ENCODE measurements at regions of chr4 and their contacts with region 1.

Region 1: DNA sequence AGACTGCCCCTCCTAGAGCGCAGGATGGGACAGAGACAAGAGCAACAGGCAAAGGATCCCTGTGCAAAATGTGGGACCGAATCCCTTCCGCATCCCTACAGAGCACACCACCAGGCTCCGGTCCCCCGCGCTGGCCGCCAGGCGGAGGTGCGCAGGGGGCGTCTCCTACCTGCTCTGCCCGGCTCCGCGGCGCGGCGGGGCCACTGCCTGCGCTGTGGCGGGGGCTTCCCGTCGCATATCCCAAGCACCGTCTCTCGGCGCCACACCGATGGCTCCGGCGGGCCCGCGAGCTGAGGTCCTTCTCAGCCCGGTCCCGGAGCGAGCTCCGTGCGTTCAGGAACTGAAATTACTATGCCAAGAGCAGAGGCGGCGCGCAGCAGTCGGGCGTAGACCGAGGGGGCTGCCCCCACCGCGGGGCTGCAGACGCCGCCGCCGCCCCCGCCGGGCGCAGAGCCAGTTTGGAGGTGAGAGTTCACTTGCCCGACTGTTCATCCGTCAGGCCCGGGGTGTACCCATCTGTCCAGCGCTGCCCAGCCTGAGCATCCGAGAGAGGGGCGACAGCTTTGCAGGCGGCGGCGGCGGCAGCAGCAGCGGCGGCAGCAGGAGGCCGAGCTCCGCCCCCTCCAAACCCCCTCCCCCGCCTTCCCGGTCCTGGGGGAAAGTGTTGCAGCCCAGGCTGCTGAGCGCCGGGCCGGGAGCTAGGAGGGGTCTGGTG is at the start of gene GPRIN3:
- DNase-seq: peak; percentile 86
- ATAC-seq: peak; percentile 74
- total RNA-seq, gene GPRIN3: 5.9 TPM

Region 2: GRCh38 chr4:89226665-89227574 is 80.7 kb before region 1 on chr4:
- intact Hi-C with region 1: loop called (anchors 5 kb)
- DNase-seq: no peak
- ATAC-seq: peak; percentile 92

Region 3: GRCh38 chr4:89242864-89243732 is 64.5 kb before region 1 on chr4:
- intact Hi-C with region 1: loop called (anchors 5 kb)
- DNase-seq: no peak
- ATAC-seq: peak; percentile 72

Region 4: DNA sequence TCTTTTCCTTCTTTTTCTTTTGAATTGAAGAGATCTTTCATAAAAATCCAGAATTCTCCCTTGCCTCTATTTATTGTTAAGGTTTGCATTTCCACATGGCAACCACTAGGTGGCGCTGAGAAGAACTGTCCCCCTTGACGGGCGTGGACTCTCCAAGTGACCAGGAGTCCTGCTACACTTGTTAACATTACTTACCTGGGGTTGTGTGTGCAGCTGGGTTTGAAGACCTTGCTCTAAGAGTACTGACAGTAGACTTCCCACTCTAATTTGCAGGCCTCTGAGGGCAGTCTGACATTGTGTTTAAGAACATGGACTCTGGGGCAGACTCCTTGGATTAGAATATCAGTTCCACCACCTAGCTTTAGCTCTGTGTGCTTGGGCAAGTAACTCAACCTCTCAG is 52.8 kb before region 1 on chr4:
- intact Hi-C with region 1: loop called (anchors 2 kb)
- DNase-seq: no peak
- ATAC-seq: no peak

Region 5: GRCh38 chr4:89410687-89411086 is 103.1 kb after region 1 on chr4:
- intact Hi-C with region 1: loop called (anchors 5 kb)
- DNase-seq: no peak
- ATAC-seq: no peak

Region 6: GRCh38 chr4:89434364-89434988 is 126.9 kb after region 1 on chr4:
- intact Hi-C with region 1: loop called (anchors 5 kb)
- DNase-seq: no peak
- ATAC-seq: peak; percentile 37

Measured in Right ventricle myocardium inferior (tissue), 1 donor.